ENCODE measurements at regions of chr12 and their contacts with region 1.

Region 1: GRCh38 chr12:85029456-85029855 is 6.6 kb downstream of the TSPAN19 start:
- DNase-seq: peak; percentile 12
- H3K27ac ChIP-seq: no peak overlapping the region
- CTCF ChIP-seq: peak; percentile 57

Region 2: DNA sequence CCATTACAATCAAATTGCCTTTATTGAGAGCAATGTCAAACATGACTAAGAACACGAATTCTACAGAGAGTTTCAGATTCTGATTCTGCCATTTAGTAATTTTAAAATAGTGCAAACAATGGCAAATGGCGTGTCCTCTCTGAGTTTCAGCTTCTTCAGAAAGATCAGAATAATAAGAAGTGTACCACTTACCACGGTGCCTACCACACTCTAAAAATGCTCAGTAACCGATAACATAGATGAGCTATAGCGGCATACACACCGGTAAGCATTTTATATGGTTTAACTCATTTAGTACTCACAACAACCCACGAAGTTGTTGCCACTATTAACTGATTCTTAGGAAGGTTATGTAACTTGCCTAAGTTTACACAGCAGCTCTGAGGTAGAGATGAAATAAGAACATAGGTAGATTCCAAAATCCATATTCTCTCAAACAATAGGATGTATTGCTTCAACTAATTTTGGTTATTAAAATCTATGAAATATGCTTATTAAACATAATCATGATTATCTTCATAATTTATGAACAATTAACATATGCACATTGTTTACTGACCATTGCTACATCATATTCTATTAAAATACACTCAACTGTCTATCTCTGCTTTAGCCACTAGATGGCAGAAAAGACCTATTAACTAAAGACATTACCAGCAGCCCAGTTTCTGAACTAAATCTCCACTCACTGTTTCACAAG is 155.2 kb before region 1 on chr12:
- CTCF ChIA-PET with region 1: interaction called, 59 read pairs
- POLR2A ChIA-PET with region 1: no interaction called
- DNase-seq: peak; percentile 34
- H3K27ac ChIP-seq: no peak overlapping the region
- CTCF ChIP-seq: peak; percentile 86